GM13977 (cell line): ENCODE measurements at regions of chr5 and their contacts with region 1.

Region 1: GRCh38 chr5:73437101-73437776 is 11.3 kb downstream of the FOXD1 start:
- DNase-seq: peak; percentile 59
- CTCF ChIP-seq: peak; percentile 16

Region 2: DNA sequence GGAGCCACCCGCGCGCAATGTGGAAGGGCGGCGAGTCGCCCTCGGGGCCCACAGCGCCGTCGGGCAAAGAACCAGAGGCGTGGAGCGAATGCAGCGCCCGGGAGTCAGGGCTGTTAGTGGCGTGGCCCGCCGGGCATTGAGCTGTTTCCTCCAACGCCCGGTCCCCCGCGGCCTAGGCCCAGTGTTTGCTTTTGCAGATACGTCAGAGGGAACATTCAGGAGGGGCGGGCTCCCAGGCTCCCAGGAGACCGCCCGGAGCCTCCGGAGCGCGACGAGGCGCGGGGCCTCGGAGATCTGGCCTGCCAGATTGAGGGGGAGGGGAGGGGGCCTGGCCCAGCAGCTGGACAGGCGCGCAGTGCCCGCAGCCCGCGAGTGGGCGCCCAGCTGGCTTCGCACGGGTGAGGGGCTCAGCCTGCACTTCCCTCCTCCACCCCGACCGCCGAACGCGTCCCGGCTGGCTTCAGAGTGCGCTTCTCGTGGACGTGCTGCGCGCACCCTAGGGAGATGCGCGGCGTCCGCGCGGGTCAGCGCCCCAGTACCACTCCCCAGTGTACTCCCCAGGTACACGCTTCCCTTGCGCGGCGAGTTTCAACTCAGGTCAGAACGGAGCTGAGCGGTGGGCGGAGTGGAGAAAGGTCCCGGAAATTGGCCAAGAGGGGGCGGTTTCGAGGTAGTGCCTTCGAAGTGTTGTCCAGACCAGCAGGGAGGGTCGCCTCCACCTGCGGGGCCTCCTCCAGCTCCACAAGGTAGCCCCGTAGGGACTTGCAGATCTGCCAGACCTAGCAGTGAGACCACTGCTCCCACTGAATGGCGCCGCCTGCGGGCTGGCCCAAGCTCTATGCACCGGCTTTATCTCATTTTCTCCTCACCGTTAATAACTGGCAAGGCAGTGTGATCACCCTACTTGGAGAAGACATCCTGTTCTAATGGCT is 133.8 kb before region 1 on chr5:
- in situ Hi-C with region 1: loop called (anchors 10 kb)
- DNase-seq: no peak
- CTCF ChIP-seq: no peak